ENCODE measurements at regions of chr10 and their contacts with region 1.

Region 1: DNA sequence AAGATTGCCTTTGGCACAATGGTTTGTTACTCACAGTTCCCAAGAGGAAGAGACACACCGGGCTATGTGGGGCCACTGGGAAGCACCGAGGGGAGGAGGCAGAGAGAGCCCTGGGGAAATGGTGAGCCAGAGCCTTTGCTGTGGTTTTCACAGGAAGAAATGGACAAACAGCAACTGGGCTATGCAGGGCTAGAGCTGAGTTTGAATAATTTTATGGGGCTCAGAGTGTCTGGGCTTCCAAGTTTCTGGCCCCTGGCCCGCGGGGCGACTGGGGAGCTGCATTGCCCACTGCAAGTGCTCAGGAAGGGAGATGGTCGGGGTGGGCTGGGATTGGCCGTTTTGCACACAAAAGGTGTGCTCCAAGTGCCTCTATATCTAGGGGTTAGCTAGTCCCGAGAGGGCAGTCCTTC is 92.6 kb downstream of the CHST15 start:
- DNase-seq: no peak
- H3K4me3 ChIP-seq: no peak overlapping the region
- H3K27ac ChIP-seq: no peak overlapping the region
- H3K4me1 ChIP-seq: peaks cover 1 to 31% (median 14%) of the 10 kb centered on the region in 4 donors
- H3K27me3 ChIP-seq: no peaks in the 10 kb centered on the region
- CTCF ChIP-seq: no peak
- EP300 ChIP-seq: no peak
- POLR2A ChIP-seq: no peak

Region 2: GRCh38 chr10:124087672-124088634 is 87.2 kb after region 1 on chr10:
- intact Hi-C with region 1: loop called (anchors 10 kb)
- DNase-seq: peak in 1 of 2 donors; percentile 65
- H3K4me3 ChIP-seq: no peak overlapping the region
- H3K27ac ChIP-seq: peak overlapping the region in 2 of 5 donors; percentile 14 to 96
- H3K4me1 ChIP-seq: peaks cover 44 to 94% (median 83%) of the 10 kb centered on the region in 4 donors
- H3K27me3 ChIP-seq: peaks cover 0 to 32% (median 11%) of the 10 kb centered on the region in 3 donors
- CTCF ChIP-seq: no peak
- EP300 ChIP-seq: no peak
- POLR2A ChIP-seq: no peak

Region 3: DNA sequence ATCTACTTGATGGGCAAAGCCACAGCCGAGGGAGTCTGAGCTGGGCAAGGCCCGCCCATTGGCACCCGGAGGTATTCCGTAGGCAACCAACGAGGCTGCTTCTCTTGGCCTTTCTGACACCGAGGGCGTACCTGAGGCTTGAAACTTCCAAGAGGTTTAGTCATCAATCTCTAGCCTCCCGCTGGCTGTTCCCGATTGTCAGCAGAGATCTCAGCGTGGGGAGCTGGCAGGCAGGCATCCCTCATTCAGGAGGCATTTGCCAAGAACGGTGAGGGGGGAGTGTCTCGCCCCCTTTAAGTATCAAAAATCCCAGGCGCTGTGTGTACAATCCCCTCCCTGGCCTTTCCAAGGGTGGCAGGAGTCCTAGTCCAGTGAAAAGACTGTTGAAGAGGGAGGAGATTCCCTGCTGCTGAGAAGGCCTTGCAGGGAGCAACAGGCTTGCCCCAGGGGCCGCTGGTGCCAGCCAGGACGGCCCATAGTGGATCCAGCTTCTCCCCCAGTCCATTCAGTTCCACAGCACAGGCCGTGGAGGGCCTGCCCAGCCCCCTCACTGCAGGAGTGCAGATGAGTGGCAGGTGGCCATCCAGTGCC is 378.2 kb after region 1 on chr10:
- intact Hi-C with region 1: loop called (anchors 5 kb)
- DNase-seq: no peak
- H3K4me3 ChIP-seq: no peak overlapping the region
- H3K27ac ChIP-seq: no peak overlapping the region
- H3K4me1 ChIP-seq: no peaks in the 10 kb centered on the region
- H3K27me3 ChIP-seq: peaks cover 0 to 55% (median 18%) of the 10 kb centered on the region in 3 donors
- CTCF ChIP-seq: no peak
- EP300 ChIP-seq: no peak
- POLR2A ChIP-seq: no peak

Measured in stomach (tissue), 19 donors.